ENCODE measurements at regions of chr19 and their contacts with region 1.

Region 1: DNA sequence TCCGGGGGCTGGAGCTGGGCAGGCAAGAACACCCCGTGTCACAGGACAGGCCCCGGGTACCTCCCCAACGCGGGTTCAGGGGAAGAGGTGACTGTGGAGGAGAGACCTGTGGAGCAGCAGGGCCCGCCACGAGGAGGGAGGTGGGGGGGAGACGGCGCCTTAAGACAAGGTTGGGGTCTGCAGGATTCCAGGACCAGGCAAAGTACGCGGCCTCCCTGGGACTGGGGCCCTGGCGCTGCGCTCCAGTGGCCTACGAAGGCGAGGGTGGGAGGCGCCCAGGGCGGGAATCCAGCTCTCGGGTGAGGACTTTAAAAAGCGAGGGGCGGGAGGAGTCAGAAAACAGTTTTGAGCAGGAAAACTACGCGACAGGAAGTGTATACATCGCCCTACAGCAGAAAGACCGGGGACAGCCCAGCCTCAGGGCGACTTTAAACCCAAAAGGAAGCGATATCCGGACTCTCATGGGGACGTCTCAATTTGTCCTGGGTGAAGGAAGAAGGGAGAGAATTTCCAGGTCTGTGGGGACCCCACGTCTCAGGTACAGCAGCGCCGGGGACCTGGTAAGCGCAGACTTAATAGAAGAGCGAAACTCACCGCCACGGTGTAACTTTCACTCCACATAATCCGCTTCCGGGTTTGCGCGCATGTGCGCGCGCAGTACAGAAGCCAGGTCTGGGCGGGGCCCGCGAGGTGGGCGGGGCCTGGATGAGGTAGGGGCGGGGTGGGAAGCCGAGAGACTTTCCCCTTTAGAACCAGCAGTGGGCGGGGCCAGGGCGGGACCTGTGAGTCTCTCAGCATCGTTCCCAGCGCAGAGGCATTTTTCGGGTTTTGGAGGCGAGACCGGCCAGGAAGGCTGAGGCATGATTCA is at the start of gene ZNF83:
- DNase-seq: peak; percentile 84 to 92 (median 89)
- H3K4me3 ChIP-seq: peak within 1 kb of the TSS; percentile 90 to 92 (median 91)
- H3K4me3 Mint-ChIP-seq: peak within 1 kb of the TSS; percentile 96 to 97
- H3K27ac ChIP-seq: peak within 1 kb of the TSS; percentile 83 to 95
- H3K27ac Mint-ChIP-seq: peak within 1 kb of the TSS; percentile 86 to 99 (median 93)
- H3K4me1 ChIP-seq: peaks cover 16 to 19% of the 10 kb centered on the region in 2 donors
- H3K4me1 Mint-ChIP-seq: peaks cover 22% of the 10 kb centered on the region
- H3K27me3 ChIP-seq: no peaks in the 10 kb centered on the region
- H3K27me3 Mint-ChIP-seq: peaks cover 0 to 3% (median 1%) of the 10 kb centered on the region in 3 donors
- CTCF ChIP-seq: no peak
- polyA plus RNA-seq, gene ZNF83: 2.4 to 47.1 (median 7.2) TPM

Region 2: GRCh38 chr19:52570000-52570861 is 67.7 kb before region 1 on chr19 and contains the start of gene ZNF701:
- intact Hi-C with region 1: loop called in 1 of 2 experiments (anchors 2 kb)
- DNase-seq: peak; percentile 89 to 91 (median 89)
- H3K4me3 ChIP-seq: peak within 1 kb of the TSS; percentile 73 to 99 (median 92)
- H3K4me3 Mint-ChIP-seq: peak within 1 kb of the TSS; percentile 96
- H3K27ac ChIP-seq: peak within 1 kb of the TSS; percentile 83 to 95
- H3K27ac Mint-ChIP-seq: peak within 1 kb of the TSS; percentile 92 to 97 (median 96)
- H3K4me1 ChIP-seq: peaks cover 11 to 13% of the 10 kb centered on the region in 2 donors
- H3K4me1 Mint-ChIP-seq: peaks cover 16% of the 10 kb centered on the region
- H3K27me3 ChIP-seq: no peaks in the 10 kb centered on the region
- H3K27me3 Mint-ChIP-seq: peaks cover 0 to 1% (median 0%) of the 10 kb centered on the region in 3 donors
- CTCF ChIP-seq: peak; percentile 51
- polyA plus RNA-seq, gene ZNF701: 4.8 to 8.2 (median 5.6) TPM

Region 3: DNA sequence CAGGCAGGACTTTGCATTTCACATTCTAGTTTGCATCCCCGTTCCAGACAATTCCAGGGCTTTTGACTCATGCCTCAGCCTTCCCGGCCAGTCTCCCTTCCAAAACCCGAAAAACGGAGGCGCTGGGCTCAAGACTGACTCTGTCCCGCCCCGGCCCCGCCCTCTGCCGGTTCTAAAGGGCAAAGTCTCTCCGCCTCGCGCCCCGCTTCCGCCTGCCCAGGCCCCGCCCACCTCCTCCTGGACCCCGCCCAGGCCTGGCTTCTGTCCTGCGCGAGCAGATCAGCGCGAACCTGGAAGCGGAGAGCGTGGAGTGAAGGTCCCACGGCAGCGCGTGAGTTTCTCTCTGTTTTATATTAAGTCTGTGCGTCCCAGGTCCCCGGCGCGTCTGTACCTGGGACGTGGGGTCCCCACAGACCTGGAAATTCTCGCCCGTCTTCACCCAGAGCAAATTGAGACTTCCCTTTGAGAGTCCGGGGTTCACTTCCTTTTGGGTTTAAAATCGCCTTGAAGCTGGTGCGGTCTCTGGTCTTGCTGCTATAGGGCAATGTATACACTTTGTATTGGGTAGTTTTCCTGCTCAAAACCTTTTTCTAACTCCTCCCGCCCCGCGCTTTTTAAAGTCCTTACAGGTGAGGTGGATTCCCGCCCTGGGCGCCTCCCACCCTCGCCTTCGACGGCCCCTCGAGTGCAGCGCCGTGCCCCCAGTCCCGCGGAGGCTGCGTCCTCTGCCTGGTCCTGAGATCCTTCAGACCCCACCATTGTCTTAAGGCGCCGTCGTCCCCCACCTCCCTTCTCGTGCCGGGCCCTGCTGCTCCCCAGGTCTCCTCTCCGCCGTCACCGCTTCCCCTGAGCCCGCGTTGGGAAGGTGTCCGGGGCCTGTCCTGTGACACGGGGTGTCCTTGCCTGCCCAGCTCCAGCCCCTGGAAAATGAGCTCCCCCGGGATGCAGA is 36.7 kb before region 1 on chr19:
- intact Hi-C with region 1: loop called (anchors 5 kb)
- DNase-seq: peak; percentile 78 to 84 (median 79)
- H3K4me3 ChIP-seq: peak overlapping the region; percentile 54 to 79 (median 72)
- H3K4me3 Mint-ChIP-seq: peak overlapping the region; percentile 92 to 93
- H3K27ac ChIP-seq: peak overlapping the region in 1 of 2 donors; percentile 66
- H3K27ac Mint-ChIP-seq: peak overlapping the region in 6 of 7 donors; percentile 54 to 86 (median 78)
- H3K4me1 ChIP-seq: peaks cover 14 to 19% of the 10 kb centered on the region in 2 donors
- H3K4me1 Mint-ChIP-seq: peaks cover 27% of the 10 kb centered on the region
- H3K27me3 ChIP-seq: no peaks in the 10 kb centered on the region
- H3K27me3 Mint-ChIP-seq: peaks cover 0 to 2% (median 2%) of the 10 kb centered on the region in 3 donors
- CTCF ChIP-seq: peak; percentile 50

Region 4: GRCh38 chr19:52690369-52691214 is 52.6 kb after region 1 on chr19:
- intact Hi-C with region 1: loop called in 1 of 2 experiments (anchors 5 kb)
- DNase-seq: peak; percentile 83 to 87 (median 86)
- H3K4me3 ChIP-seq: peak overlapping the region; percentile 81 to 89 (median 81)
- H3K4me3 Mint-ChIP-seq: peak overlapping the region; percentile 96 to 99
- H3K27ac ChIP-seq: peak overlapping the region; percentile 75 to 80
- H3K27ac Mint-ChIP-seq: peak overlapping the region; percentile 84 to 94 (median 89)
- H3K4me1 ChIP-seq: peaks cover 31 to 33% of the 10 kb centered on the region in 2 donors
- H3K4me1 Mint-ChIP-seq: peaks cover 35% of the 10 kb centered on the region
- H3K27me3 ChIP-seq: no peaks in the 10 kb centered on the region
- H3K27me3 Mint-ChIP-seq: peaks cover 0 to 10% (median 0%) of the 10 kb centered on the region in 3 donors
- CTCF ChIP-seq: peak; percentile 21

Region 5: DNA sequence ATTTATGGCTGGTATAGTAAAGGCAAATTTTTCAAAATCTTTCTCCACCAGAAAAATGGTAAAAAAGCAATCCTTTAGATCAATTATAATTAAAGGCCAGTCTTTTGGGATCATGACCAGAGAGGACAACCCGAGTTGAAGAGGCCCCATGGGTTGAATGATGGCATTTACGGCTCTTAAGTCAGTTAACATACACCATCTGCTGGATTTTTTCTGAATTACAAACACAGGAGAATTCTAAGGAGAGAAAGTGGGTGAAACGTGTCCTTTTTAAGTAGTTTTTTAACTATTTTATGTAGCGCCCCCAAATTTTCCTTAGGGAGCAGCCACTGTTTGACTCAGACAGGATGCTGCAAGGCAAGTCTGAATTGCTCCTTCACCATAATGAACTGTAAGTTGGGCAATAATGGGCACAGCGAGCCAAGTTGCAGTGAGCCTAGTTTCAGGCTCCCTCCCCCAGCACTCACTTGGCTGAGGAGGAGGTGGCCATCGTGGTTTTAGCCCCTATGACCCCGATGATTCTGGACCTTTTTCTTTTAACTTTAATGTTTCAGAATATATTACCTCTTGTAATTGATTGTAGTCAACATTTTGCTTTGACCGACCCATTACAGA is 110.5 kb after region 1 on chr19:
- intact Hi-C with region 1: no loop called
- DNase-seq: peak; percentile 21 to 32 (median 21)
- H3K4me3 ChIP-seq: no peak overlapping the region
- H3K4me3 Mint-ChIP-seq: no peak overlapping the region
- H3K27ac ChIP-seq: no peak overlapping the region
- H3K27ac Mint-ChIP-seq: no peak overlapping the region
- H3K4me1 ChIP-seq: no peaks in the 10 kb centered on the region
- H3K4me1 Mint-ChIP-seq: no peaks in the 10 kb centered on the region
- H3K27me3 ChIP-seq: no peaks in the 10 kb centered on the region
- H3K27me3 Mint-ChIP-seq: peaks cover 0 to 1% (median 0%) of the 10 kb centered on the region in 3 donors
- CTCF ChIP-seq: peak; percentile 60

Measured in CD14-positive monocyte (primary cell).